Cardiac septum (tissue), 1 donor: ENCODE measurements at regions of chr15 and their contacts with region 1.

Region 1: GRCh38 chr15:95259513-95259912 is 1028.2 kb downstream of the MCTP2 start:
- DNase-seq: peak; percentile 80

Region 2: DNA sequence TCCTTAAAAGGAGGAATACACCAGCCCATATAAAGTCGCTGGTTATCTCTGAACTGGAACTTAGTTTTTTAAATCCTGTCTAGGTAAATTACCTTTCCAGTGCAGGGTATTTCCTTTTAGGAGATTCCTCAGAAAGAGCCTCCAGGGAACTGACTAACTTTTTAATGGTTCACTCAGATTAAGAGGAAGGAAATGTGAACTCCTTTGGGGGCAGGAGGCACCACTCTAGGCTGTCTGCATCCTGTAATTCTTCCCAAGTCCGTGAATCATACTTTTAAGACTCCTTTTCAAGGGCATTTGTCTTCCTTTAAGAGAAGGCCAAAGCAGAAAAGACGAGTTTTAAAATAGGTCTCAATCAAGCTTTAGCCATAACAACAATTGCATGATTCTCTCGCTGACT is 199.8 kb after region 1 on chr15:
- intact Hi-C with region 1: loop called (anchors 10 kb)
- DNase-seq: no peak

Region 3: DNA sequence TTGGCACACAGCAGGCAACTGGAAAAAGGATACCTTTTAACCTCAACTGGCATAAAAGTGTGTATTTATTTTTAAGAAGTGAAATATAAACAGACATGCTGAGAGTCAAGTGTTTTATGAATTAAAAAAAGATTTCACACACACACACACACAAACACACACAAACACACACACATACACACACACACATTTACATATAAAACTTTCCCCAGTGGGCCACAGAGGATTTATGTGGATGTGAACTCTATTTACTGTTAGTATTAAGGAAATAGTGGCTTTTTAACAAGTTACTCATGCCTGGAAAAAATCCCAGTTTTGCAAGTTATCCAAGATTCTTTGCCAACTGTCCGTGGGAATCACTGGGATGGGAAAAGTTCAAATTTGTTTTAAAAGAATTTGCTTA is 345.1 kb after region 1 on chr15:
- intact Hi-C with region 1: loop called (anchors 10 kb)
- DNase-seq: no peak

Region 4: DNA sequence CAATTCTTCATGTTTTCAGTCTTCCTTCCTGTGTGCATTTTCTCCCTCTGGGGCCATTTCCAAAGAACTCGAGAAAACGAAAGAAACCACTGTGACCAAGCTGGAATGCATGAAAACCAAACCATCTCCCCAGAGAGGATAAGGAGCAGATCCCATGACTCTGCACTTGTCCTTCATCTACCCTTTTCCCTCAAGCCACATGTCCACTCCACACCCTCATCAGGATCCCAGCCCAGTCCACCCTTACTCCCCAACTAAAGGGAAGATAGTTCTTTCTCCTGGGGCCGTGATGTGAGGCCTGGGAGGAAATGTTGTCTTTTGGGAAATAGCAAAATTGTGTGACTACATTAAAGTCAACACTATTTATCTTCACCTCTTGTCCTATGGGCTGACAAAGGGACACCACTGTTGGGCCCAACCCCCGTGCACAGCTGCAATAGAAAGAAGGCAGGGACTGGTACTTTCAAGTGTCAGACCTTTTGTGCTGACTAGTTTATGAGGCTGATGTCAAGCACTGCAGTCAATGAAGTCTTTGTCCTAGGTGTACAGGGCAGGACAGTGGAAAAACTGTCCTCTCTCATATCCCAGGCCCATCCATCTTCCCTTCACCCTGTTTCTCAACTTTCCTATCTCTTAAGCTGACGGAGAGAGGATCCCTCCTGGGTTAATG is 583.9 kb after region 1 on chr15:
- intact Hi-C with region 1: loop called (anchors 10 kb)
- DNase-seq: no peak

Region 5: GRCh38 chr15:96345560-96346399 is 1086.3 kb after region 1 on chr15:
- intact Hi-C with region 1: loop called (anchors 2 kb)
- DNase-seq: peak; percentile 81

Region 6: DNA sequence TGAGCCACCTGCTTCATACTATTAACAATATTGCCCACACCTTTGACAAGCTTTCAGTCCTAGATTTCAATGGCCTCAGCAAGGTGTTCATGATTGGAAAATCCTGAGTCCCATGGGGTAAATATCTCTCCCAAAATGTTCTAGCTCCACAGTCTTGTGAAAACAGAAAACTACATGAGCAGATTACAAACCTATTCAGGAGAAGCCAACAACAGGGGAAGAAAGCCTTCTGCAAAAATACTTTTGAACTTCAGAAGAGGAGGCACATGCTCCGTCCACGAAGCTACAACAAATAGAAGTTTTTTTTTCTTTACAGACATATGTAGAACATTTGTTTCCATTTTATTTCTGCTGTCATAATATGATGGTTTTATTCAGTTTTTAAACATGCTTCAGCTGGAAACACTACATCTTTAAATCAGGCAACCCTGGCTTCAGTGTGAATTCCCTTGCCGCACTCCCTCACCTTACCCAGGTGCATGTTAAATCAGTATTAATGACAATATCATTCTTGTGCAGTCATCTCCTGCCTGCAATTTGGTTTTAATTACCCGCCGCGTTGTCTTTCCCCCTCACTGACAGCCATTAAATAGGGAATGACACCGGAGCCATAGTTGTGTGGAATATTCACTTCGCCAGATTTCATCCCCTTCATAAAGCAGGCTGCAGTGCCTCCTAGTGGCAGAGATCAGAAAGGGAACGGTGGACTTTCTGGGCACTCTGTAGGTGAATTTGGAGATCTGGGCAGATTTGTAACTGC is 1975.5 kb after region 1 on chr15:
- intact Hi-C with region 1: loop called (anchors 10 kb)
- DNase-seq: no peak